ENCODE measurements at regions of chrX and their contacts with region 1.

Region 1: GRCh38 chrX:132092439-132093065 is 35.3 kb downstream of the FRMD7 start:
- DNase-seq: peak; percentile 68
- ATAC-seq: peak; percentile 95
- H3K4me3 Mint-ChIP-seq: no peak overlapping the region
- H3K27ac Mint-ChIP-seq: no peak overlapping the region
- H3K4me1 Mint-ChIP-seq: no peaks in the 10 kb centered on the region
- H3K27me3 Mint-ChIP-seq: no peaks in the 10 kb centered on the region
- CTCF ChIP-seq: peak; percentile 30; the same call in 1 of the 2 replicates

Region 2: DNA sequence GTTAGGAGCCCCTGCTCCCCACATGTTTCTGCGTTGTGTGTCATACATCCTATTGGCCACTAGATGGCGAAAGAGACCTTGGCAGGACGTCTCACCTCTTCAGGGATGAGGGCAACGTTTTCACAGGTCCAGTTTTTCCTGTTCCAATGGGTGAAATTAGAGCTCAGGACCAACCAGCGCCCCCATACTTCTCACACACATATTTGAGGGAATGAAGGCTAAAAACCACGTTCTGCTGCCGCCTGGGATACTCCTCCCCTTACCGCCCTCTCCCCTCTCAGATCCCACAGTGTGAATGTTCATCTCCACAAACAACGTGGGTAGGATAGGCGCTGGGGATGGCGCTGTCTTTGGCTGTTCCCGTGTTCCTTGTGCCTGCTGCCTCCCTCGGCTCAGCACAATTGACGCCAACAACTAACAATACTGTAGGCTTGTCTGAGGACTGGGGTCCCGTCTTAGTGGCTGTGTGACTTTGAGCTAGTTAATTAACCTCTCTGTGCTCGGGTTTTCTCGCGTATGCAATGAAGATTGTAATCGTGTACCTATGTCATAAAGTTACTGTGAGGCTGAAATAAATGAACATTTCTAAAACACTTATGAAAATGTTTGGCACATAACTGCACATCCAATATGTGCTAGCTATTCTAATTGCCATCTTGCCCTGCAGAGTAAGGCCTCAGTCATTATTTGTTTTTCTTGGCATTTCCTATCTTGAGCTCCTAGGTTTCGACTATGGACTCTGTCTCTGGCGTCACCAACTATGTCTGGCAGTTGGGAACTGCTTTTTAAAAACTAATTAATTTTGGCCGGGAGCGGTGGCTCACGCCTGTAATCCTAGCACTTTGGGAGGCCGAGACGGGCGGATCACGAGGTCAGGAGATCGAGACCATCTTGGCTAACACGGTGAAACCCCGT is 250.8 kb before region 1 on chrX:
- CTCF ChIA-PET with region 1: interaction called, 17 read pairs
- POLR2A ChIA-PET with region 1: no interaction called
- DNase-seq: peak; percentile 29
- ATAC-seq: peak; percentile 96
- H3K4me3 Mint-ChIP-seq: peak overlapping the region; percentile 44; the same call in 1 of the 2 replicates
- H3K27ac Mint-ChIP-seq: no peak overlapping the region
- H3K4me1 Mint-ChIP-seq: peaks cover 6% of the 10 kb centered on the region
- H3K27me3 Mint-ChIP-seq: no peaks in the 10 kb centered on the region
- CTCF ChIP-seq: no peak

Region 3: GRCh38 chrX:132146461-132146860 is 53.9 kb after region 1 on chrX:
- CTCF ChIA-PET with region 1: interaction called, 10 read pairs
- POLR2A ChIA-PET with region 1: no interaction called
- DNase-seq: peak; percentile 11
- ATAC-seq: peak; percentile 59; the same call in 1 of the 2 replicates
- H3K4me3 Mint-ChIP-seq: no peak overlapping the region
- H3K27ac Mint-ChIP-seq: no peak overlapping the region
- H3K4me1 Mint-ChIP-seq: peaks cover 10% of the 10 kb centered on the region; the same call in 1 of the 2 replicates
- H3K27me3 Mint-ChIP-seq: no peaks in the 10 kb centered on the region
- CTCF ChIP-seq: no peak

Region 4: DNA sequence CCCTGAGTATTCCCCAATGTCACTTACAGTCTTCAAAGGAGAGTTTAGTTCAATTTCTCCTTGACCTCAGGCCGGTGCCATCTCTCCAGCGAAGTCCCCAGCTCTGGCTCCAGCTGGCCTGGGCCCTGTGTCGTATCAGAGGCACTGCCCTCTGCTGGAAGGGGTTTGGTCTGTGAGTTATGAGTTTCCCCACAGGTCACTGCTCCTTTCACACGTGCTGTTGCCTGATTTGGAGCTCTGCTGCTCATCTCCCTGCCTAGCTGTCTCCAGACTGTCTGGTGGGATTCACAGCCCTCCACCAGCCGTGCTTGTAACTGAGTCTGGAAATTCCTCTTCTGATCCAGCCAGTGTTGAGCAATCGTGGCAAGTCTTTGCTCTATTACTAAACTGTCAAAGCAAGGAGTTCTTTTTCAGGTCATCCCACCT is 126.8 kb after region 1 on chrX and contains the start of gene RAP2C:
- CTCF ChIA-PET with region 1: interaction called, 113 read pairs
- POLR2A ChIA-PET with region 1: interaction called, 4 read pairs
- DNase-seq: peak; percentile 66
- ATAC-seq: peak; percentile 69
- H3K4me3 Mint-ChIP-seq: peak within 1 kb of the TSS; percentile 76
- H3K27ac Mint-ChIP-seq: peak within 1 kb of the TSS; percentile 91
- H3K4me1 Mint-ChIP-seq: peaks cover 18% of the 10 kb centered on the region
- H3K27me3 Mint-ChIP-seq: no peaks in the 10 kb centered on the region
- CTCF ChIP-seq: no peak
- total RNA-seq, gene RAP2C: 20.5 to 25.2 TPM (median 25.0 TPM) in 3 replicates

Region 5: GRCh38 chrX:132292793-132293192 is 200.2 kb after region 1 on chrX:
- CTCF ChIA-PET with region 1: interaction called, 12 read pairs
- POLR2A ChIA-PET with region 1: no interaction called
- DNase-seq: no peak
- ATAC-seq: peak; percentile 60
- H3K4me3 Mint-ChIP-seq: no peak overlapping the region
- H3K27ac Mint-ChIP-seq: no peak overlapping the region
- H3K4me1 Mint-ChIP-seq: no peaks in the 10 kb centered on the region
- H3K27me3 Mint-ChIP-seq: no peaks in the 10 kb centered on the region
- CTCF ChIP-seq: peak; percentile 19; the same call in 1 of the 2 replicates

Measured in WTC11 (cell line).